ENCODE measurements at regions of chr20 and their contacts with region 1.

Region 1: DNA sequence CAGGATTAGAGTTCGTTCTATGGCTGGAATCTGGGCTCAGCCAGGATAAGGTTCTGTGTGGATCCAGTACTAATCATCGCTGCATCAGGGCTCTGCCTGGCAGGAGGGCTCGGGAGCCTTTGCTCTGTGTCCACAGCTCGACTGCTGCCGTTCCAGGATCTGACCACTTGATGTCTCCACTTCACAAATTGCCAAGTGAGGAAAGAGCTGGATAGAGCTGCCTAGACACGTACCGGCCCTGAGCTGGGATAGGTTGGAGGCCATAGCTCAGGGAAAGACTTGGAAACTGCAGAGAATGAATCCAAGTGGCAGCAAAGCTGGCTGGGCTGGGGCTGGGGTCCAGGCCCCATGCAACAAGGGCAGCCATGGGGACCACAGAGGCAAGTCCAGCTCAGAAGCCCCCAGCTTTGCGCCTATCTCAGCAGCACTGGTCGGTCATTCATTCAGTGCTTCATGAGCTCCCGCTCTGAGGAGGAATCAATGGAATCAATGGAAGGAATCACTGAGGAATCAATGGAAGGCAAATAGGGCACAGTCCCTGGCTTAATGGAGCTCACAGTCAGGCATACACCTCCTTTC is 38.0 kb upstream of the TOP1 start:
- DNase-seq: peak; percentile 87
- ATAC-seq: peak; percentile 99
- H3K4me3 ChIP-seq: no peak overlapping the region
- H3K27ac ChIP-seq: peak overlapping the region; percentile 19
- H3K4me1 ChIP-seq: peaks cover 12% of the 10 kb centered on the region
- H3K27me3 ChIP-seq: no peaks in the 10 kb centered on the region
- CTCF ChIP-seq: peak; percentile 95
- POLR2A ChIP-seq: no peak
- RAD21 ChIP-seq: peak; percentile 94

Region 2: GRCh38 chr20:40962730-40963504 is 27.7 kb before region 1 on chr20:
- CTCF ChIA-PET with region 1: no interaction called
- POLR2A ChIA-PET with region 1: no interaction called
- dilution Hi-C with region 1: no loop called
- in situ Hi-C with region 1: no loop called
- intact Hi-C with region 1: no loop called
- DNase-seq: peak; percentile 44
- ATAC-seq: peak; percentile 89
- H3K4me3 ChIP-seq: no peak overlapping the region
- H3K27ac ChIP-seq: no peak overlapping the region
- H3K4me1 ChIP-seq: no peaks in the 10 kb centered on the region; the same call in 1 of the 2 replicates
- H3K27me3 ChIP-seq: no peaks in the 10 kb centered on the region
- CTCF ChIP-seq: peak; percentile 88
- POLR2A ChIP-seq: 0 out of 2 replicates have a peak, but pooled peaks have one; percentile 41
- RAD21 ChIP-seq: peak; percentile 90

Region 3: GRCh38 chr20:41028348-41029148 is 37.9 kb after region 1 on chr20 and contains the start of gene TOP1:
- CTCF ChIA-PET with region 1: interaction called, 9 read pairs
- POLR2A ChIA-PET with region 1: interaction called, 24 read pairs
- dilution Hi-C with region 1: no loop called
- in situ Hi-C with region 1: no loop called
- intact Hi-C with region 1: loop called (anchors 1 kb)
- DNase-seq: peak; percentile 100
- ATAC-seq: peak; percentile 98
- H3K4me3 ChIP-seq: peak within 1 kb of the TSS; percentile 76
- H3K27ac ChIP-seq: peak within 1 kb of the TSS; percentile 97
- H3K4me1 ChIP-seq: peaks cover 5% of the 10 kb centered on the region
- H3K27me3 ChIP-seq: no peaks in the 10 kb centered on the region
- CTCF ChIP-seq: no peak
- POLR2A ChIP-seq: peak; percentile 96
- RAD21 ChIP-seq: no peak
- total RNA-seq, gene TOP1: 14.0 and 20.8 TPM in 2 replicates

Region 4: DNA sequence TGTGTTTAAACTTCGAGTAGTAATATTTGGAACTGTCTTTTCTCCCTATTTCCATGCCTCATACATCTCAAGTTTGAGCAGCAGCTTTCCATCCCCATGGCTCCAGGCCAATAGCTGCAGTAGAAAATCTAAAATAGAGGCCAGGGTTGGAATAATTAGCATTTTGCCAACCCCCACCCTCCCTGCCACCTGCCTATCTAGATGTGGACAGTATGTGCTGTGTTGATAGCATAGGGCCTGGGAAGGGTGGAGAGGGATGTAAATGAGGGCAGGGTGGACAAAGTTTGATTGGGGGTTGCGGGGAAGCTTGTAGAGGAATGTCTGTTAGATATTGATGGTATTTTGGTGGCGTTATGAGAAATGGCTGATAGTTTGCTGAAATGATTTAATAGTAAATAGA is 43.6 kb after region 1 on chr20:
- CTCF ChIA-PET with region 1: interaction called, 9 read pairs
- POLR2A ChIA-PET with region 1: interaction called, 24 read pairs
- dilution Hi-C with region 1: no loop called
- in situ Hi-C with region 1: no loop called
- intact Hi-C with region 1: loop called (anchors 1 kb)
- DNase-seq: no peak
- ATAC-seq: no peak
- H3K4me3 ChIP-seq: no peak overlapping the region
- H3K27ac ChIP-seq: peak overlapping the region; percentile 29; the same call in 1 of the 2 replicates
- H3K4me1 ChIP-seq: peaks cover 12% of the 10 kb centered on the region
- H3K27me3 ChIP-seq: no peaks in the 10 kb centered on the region
- CTCF ChIP-seq: no peak
- POLR2A ChIP-seq: no peak
- RAD21 ChIP-seq: no peak

Region 5: GRCh38 chr20:41072190-41072863 is 81.7 kb after region 1 on chr20:
- CTCF ChIA-PET with region 1: interaction called, 6 read pairs
- POLR2A ChIA-PET with region 1: interaction called, 11 read pairs
- dilution Hi-C with region 1: no loop called
- in situ Hi-C with region 1: no loop called
- intact Hi-C with region 1: no loop called
- DNase-seq: peak; percentile 88
- ATAC-seq: peak; percentile 82
- H3K4me3 ChIP-seq: no peak overlapping the region
- H3K27ac ChIP-seq: peak overlapping the region; percentile 62
- H3K4me1 ChIP-seq: peaks cover 22% of the 10 kb centered on the region
- H3K27me3 ChIP-seq: no peaks in the 10 kb centered on the region
- CTCF ChIP-seq: no peak
- POLR2A ChIP-seq: no peak
- RAD21 ChIP-seq: no peak

Region 6: GRCh38 chr20:41078329-41078728 is 87.7 kb after region 1 on chr20:
- CTCF ChIA-PET with region 1: interaction called, 26 read pairs
- POLR2A ChIA-PET with region 1: no interaction called
- dilution Hi-C with region 1: no loop called
- in situ Hi-C with region 1: no loop called
- intact Hi-C with region 1: loop called (anchors 1 kb)
- DNase-seq: peak; percentile 53
- ATAC-seq: peak; percentile 55
- H3K4me3 ChIP-seq: no peak overlapping the region
- H3K27ac ChIP-seq: no peak overlapping the region
- H3K4me1 ChIP-seq: peaks cover 14% of the 10 kb centered on the region
- H3K27me3 ChIP-seq: no peaks in the 10 kb centered on the region
- CTCF ChIP-seq: peak; percentile 61
- POLR2A ChIP-seq: no peak
- RAD21 ChIP-seq: peak; percentile 66

Region 7: DNA sequence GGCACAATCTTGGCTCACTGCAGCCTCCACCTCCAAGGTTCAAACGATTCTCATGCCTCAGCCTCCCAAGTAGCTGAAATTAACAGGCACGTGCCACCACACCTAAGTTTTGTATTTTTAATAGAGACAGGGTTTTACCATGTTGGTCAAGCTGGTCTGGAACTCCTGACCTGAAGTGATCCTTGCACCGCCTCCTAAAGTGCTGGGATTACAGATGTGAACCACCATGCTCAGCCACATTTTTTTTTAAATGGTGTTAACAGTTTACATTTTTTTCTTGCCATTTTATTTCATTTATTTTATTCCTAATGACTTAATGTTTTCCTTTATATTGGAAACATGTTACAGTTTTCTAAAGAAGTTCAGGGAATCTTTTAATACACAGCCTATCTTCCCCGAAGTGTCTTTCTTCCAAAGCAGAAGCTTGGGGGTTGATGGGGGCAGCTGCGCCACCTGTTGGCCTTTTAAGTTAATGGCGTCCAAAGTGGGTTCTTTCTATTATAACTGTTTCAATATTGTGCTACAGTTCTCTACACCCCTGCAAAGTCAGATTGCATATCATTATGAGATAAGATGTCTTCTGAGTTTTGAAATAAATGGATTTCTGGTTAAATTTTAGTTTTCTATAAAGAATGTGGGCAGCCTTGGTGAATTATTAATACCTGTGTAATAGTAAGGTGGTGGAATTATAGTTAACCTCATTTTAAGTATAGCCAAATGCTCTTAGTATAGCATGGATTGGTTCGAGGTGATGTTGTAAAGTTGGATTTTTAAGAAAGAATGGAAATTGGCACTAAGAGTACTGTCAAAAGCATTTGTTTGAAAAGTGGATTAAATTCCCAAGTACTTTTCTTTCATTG is 104.7 kb after region 1 on chr20:
- CTCF ChIA-PET with region 1: interaction called, 15 read pairs
- POLR2A ChIA-PET with region 1: interaction called, 10 read pairs
- dilution Hi-C with region 1: no loop called
- in situ Hi-C with region 1: no loop called
- intact Hi-C with region 1: loop called (anchors 1 kb)
- DNase-seq: peak; percentile 67
- ATAC-seq: peak; percentile 73
- H3K4me3 ChIP-seq: no peak overlapping the region
- H3K27ac ChIP-seq: no peak overlapping the region
- H3K4me1 ChIP-seq: peaks cover 23% of the 10 kb centered on the region
- H3K27me3 ChIP-seq: no peaks in the 10 kb centered on the region
- CTCF ChIP-seq: peak; percentile 85
- POLR2A ChIP-seq: no peak
- RAD21 ChIP-seq: peak; percentile 83

Measured in IMR-90 (cell line).